Heart right ventricle (tissue), 16 donors: ENCODE measurements at regions of chr13 and their contacts with region 1.

Region 1: DNA sequence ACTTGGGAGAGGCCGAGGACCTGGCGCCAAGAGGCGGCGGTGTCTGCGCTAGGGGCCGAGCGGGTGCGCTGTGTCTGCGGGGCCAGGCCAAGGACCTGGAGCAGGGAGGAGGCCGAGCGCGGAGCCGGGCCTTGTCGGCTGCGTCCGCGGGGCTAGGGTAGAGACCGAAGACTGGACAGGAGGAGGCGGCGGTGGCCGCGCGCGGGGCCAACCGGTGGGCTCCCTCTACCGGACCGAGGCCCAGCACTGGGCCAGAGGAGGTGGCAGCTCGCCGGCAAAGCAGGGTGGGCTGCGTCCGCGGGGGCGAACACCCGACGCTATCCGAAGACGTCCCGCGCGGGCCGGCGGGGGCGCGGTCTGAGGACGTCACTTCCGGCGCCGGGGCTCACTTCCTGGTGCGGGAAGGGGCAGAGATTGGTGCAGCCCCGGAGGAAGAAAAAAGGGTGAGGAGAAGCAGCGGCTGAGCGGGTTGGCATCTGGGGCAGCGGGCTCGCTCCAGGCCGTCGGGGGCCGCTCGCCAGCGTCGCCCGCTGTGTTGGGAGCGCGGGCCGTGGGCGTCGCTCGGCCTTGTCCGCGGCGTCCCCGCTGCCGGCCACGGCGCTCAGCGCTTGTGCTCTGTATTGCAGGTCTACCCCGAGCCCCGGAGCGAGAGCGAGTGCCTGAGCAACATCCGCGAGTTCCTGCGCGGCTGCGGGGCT is 38.3 kb downstream of the ARHGEF7 start:
- DNase-seq: peak; percentile 94 to 95
- ATAC-seq: peak; percentile 97 to 99 (median 98)
- H3K4me3 ChIP-seq: peak overlapping the region; percentile 72 to 95 (median 89)
- H3K27ac ChIP-seq: peak overlapping the region; percentile 89 to 99 (median 96)
- H3K4me1 ChIP-seq: peaks cover 10 to 68% (median 31%) of the 10 kb centered on the region in 9 donors
- H3K27me3 ChIP-seq: peaks cover 0 to 4% (median 0%) of the 10 kb centered on the region in 7 donors
- CTCF ChIP-seq: peak in 5 of 9 donors; percentile 26 to 67 (median 49)

Region 2: GRCh38 chr13:111114362-111115060 is 38.9 kb before region 1 on chr13:
- intact Hi-C with region 1: loop called in 2 of 10 experiments (anchors 1 to 5 kb)
- DNase-seq: peak; percentile 41 to 60
- ATAC-seq: peak; percentile 59 to 73 (median 70)
- H3K4me3 ChIP-seq: peak overlapping the region; percentile 22 to 72 (median 64)
- H3K27ac ChIP-seq: peak overlapping the region; percentile 61 to 92 (median 76)
- H3K4me1 ChIP-seq: peaks cover 0 to 44% (median 17%) of the 10 kb centered on the region in 9 donors
- H3K27me3 ChIP-seq: peaks cover 0 to 85% (median 38%) of the 10 kb centered on the region in 7 donors
- CTCF ChIP-seq: no peak

Region 3: GRCh38 chr13:111202745-111203144 is 49.3 kb after region 1 on chr13:
- intact Hi-C with region 1: loop called in 3 of 10 experiments (anchors 2 to 10 kb)
- DNase-seq: peak in 1 of 2 donors; percentile 81
- ATAC-seq: peak; percentile 65 to 93 (median 84)
- H3K4me3 ChIP-seq: peak overlapping the region in 9 of 10 donors; percentile 18 to 60 (median 51)
- H3K27ac ChIP-seq: peak overlapping the region; percentile 44 to 84 (median 79)
- H3K4me1 ChIP-seq: peaks cover 14 to 83% (median 47%) of the 10 kb centered on the region in 9 donors
- H3K27me3 ChIP-seq: no peaks in the 10 kb centered on the region
- CTCF ChIP-seq: no peak

Region 4: GRCh38 chr13:111210544-111211469 is 57.4 kb after region 1 on chr13:
- intact Hi-C with region 1: loop called in 8 of 10 experiments (anchors 2 to 10 kb)
- DNase-seq: peak in 1 of 2 donors; percentile 51
- ATAC-seq: peak; percentile 41 to 80 (median 52)
- H3K4me3 ChIP-seq: peak overlapping the region in 3 of 10 donors; percentile 3 to 9 (median 7)
- H3K27ac ChIP-seq: peak overlapping the region in 4 of 10 donors; percentile 6 to 33 (median 17)
- H3K4me1 ChIP-seq: peaks cover 4 to 97% (median 74%) of the 10 kb centered on the region in 9 donors
- H3K27me3 ChIP-seq: no peaks in the 10 kb centered on the region
- CTCF ChIP-seq: no peak

Region 5: GRCh38 chr13:111216166-111216960 is 62.9 kb after region 1 on chr13:
- intact Hi-C with region 1: loop called in 8 of 10 experiments (anchors 2 to 5 kb)
- DNase-seq: peak in 1 of 2 donors; percentile 43
- ATAC-seq: peak; percentile 41 to 63 (median 52)
- H3K4me3 ChIP-seq: no peak overlapping the region
- H3K27ac ChIP-seq: peak overlapping the region in 5 of 10 donors; percentile 10 to 51 (median 23)
- H3K4me1 ChIP-seq: peaks cover 9 to 95% (median 78%) of the 10 kb centered on the region in 9 donors
- H3K27me3 ChIP-seq: no peaks in the 10 kb centered on the region
- CTCF ChIP-seq: peak in 8 of 9 donors; percentile 16 to 62 (median 50)

Region 6: GRCh38 chr13:111281751-111282311 is 128.4 kb after region 1 on chr13:
- intact Hi-C with region 1: loop called in 2 of 10 experiments (anchors 2 to 5 kb)
- DNase-seq: peak in 1 of 2 donors; percentile 47
- ATAC-seq: peak in 7 of 8 donors; percentile 13 to 74 (median 63)
- H3K4me3 ChIP-seq: no peak overlapping the region
- H3K27ac ChIP-seq: peak overlapping the region; percentile 63 to 94 (median 77)
- H3K4me1 ChIP-seq: peaks cover 15 to 65% (median 51%) of the 10 kb centered on the region in 9 donors
- H3K27me3 ChIP-seq: no peaks in the 10 kb centered on the region
- CTCF ChIP-seq: peak in 2 of 9 donors; percentile 21 to 31